ENCODE measurements at regions of chr1 and their contacts with region 1.

Region 1: DNA sequence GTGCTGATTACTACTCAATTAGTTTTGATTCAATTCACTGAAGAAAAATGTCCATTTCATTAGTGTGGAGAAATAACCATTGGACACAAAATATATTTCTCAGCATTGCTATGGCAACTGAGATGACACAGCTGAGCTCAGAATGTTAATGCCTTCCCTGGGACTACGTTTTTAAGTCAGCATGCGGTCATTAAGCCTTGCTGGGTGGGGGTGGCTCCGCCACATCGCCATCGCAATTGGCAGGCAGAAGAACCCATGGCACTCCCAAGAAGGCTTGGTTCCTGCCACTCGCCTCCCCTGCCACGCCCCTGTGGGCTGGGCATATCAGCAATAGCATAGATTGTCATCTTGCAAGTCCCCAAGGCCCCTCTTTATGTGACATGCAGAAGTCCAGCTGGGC is 256.7 kb upstream of the CAMK1G start:
- DNase-seq: no peak
- H3K4me3 Mint-ChIP-seq: no peak overlapping the region
- H3K27ac Mint-ChIP-seq: no peak overlapping the region
- H3K4me1 Mint-ChIP-seq: peaks cover 27% of the 10 kb centered on the region
- H3K27me3 Mint-ChIP-seq: no peaks in the 10 kb centered on the region
- CTCF ChIP-seq: no peak

Region 2: DNA sequence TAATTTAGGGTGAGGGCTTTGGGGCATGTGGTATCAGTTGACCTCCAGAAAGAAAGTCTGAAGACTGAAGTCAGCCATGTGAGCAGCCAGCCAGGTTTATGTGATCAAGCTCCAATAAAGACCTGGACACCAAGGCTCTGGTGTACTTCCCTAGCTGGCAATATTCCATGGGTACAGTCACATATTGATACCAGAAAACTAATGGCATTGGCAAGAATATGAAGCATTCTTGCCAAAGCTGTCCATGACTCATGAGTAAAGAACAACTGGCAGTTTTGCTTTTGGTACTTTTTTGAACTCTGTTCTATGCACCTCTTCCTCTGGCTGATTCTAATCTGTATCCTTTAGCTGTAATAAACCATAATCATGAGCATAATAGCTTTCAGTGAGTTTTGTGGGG is 158.6 kb before region 1 on chr1:
- CTCF ChIA-PET with region 1: no interaction called
- POLR2A ChIA-PET with region 1: no interaction called
- intact Hi-C with region 1: no loop called
- DNase-seq: peak; percentile 99
- H3K4me3 Mint-ChIP-seq: peak overlapping the region; percentile 0
- H3K27ac Mint-ChIP-seq: peak overlapping the region; percentile 0
- H3K4me1 Mint-ChIP-seq: peaks cover 28% of the 10 kb centered on the region
- H3K27me3 Mint-ChIP-seq: no peaks in the 10 kb centered on the region
- CTCF ChIP-seq: no peak

Region 3: DNA sequence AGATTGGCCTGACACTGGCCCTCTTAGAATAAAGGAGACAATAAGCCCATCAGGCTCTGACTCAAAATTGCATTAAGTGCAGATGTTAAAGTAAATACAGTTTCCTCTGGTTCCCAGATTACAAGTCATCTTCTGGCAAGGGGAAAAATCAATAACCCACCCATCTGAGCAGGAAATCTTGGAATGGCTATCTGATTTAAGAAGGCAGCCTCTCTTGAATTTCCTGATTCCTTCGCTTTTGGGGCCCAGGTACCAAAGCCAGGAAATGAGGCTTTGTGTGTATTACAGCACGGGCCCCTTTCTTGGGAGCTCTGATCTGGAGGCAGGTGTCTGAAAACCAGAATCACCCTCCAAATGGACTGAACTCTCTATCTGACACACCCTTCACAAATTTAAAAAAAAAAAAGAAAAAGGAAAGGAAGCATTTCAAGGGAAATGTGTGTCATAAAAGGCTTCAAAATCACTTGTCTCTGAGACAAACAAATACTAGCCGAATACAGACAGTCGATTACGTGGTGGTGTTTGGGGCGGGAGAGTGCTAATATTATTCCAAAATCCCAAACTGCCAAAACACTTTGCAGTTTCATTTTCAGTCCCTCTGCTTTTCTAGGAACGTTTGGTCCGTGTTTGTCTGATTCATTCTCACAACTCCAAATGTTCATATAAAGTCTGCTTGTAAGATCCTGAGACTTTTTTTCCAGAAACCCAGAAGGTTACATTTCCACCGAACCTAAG is 15.8 kb after region 1 on chr1:
- CTCF ChIA-PET with region 1: interaction called, 10 read pairs
- POLR2A ChIA-PET with region 1: interaction called, 14 read pairs
- intact Hi-C with region 1: no loop called
- DNase-seq: no peak
- H3K4me3 Mint-ChIP-seq: no peak overlapping the region
- H3K27ac Mint-ChIP-seq: no peak overlapping the region
- H3K4me1 Mint-ChIP-seq: no peaks in the 10 kb centered on the region
- H3K27me3 Mint-ChIP-seq: no peaks in the 10 kb centered on the region
- CTCF ChIP-seq: no peak